ENCODE measurements at regions of chr5 and their contacts with region 1.

Region 1: DNA sequence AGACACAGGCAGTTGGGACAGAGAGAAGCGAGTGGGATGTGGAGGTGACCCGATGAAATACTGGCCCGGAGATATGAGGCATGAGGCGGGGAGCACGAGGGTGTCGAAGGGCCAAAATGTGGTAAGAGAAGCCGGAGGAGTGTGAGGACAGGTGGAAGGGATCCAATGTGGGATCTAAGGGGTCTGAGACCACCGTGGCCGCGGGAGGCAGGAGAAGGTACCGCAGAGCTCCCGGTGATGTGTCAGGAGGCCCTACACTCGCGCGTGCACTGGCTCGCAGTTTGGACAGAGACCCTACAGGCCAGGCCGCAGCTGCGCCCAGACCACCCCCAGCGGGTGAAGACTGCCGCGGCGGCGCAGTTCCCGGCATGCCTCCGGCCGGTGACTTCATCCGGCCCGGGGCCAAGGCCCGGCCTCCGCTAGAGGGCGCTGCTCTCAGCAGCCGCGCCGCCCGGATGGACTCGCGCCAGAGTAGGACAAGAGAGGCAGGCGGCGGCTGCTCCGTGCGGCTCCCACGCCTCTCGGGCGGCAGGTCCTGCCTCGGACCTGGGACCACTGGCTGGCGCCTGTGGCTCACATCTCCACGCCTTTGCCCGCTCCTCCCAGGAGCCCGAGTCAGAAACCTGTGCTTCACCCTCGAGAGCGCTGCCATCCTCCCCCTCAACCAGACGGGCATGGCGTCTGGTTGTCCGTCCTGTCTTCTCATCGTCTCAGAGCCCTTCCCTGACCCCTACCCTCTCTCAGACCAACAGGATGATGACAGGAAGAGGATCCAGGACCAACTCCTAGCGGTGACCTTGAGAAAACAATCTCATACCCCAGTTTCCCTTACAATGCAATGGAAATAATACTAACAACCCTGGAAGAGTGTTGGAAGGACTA is 35.4 kb upstream of the STING1 start:
- DNase-seq: peak; percentile 93
- H3K4me3 Mint-ChIP-seq: peak overlapping the region; percentile 82
- H3K27ac Mint-ChIP-seq: peak overlapping the region; percentile 81
- H3K4me1 Mint-ChIP-seq: peaks cover 32% of the 10 kb centered on the region
- H3K27me3 Mint-ChIP-seq: no peaks in the 10 kb centered on the region

Region 2: GRCh38 chr5:139410993-139411828 is 106.7 kb before region 1 on chr5:
- CTCF ChIA-PET with region 1: interaction called, 443 read pairs
- POLR2A ChIA-PET with region 1: interaction called, 5 read pairs
- intact Hi-C with region 1: no loop called
- DNase-seq: no peak
- H3K4me3 Mint-ChIP-seq: no peak overlapping the region
- H3K27ac Mint-ChIP-seq: no peak overlapping the region
- H3K4me1 Mint-ChIP-seq: peaks cover 43% of the 10 kb centered on the region
- H3K27me3 Mint-ChIP-seq: no peaks in the 10 kb centered on the region

Region 3: DNA sequence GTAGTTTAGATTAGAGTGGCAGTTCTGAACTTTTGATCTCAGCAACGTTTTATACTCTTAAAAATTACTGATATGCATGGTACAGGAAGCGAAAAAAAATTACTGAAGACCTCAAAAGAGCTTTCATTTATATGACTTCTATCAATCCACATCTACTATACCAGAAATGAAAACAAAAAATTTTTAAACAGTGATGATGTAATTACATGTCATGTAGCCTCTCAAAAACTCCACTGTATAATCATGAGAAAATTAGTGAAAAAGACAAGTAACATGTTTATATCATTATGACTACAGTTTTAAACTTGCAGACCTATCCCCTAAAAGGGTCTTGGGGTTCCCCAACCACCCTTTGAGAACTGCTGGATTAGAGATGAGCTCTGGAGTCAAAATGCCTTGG is 87.9 kb before region 1 on chr5:
- CTCF ChIA-PET with region 1: interaction called, 443 read pairs
- POLR2A ChIA-PET with region 1: no interaction called
- intact Hi-C with region 1: loop called (anchors 5 kb)
- DNase-seq: no peak
- H3K4me3 Mint-ChIP-seq: no peak overlapping the region
- H3K27ac Mint-ChIP-seq: peak overlapping the region; percentile 69
- H3K4me1 Mint-ChIP-seq: peaks cover 11% of the 10 kb centered on the region
- H3K27me3 Mint-ChIP-seq: no peaks in the 10 kb centered on the region

Region 4: GRCh38 chr5:139446956-139447779 is 70.8 kb before region 1 on chr5:
- CTCF ChIA-PET with region 1: interaction called, 14 read pairs
- POLR2A ChIA-PET with region 1: interaction called, 4 read pairs
- intact Hi-C with region 1: no loop called
- DNase-seq: peak; percentile 72
- H3K4me3 Mint-ChIP-seq: peak overlapping the region; percentile 7
- H3K27ac Mint-ChIP-seq: peak overlapping the region; percentile 93
- H3K4me1 Mint-ChIP-seq: peaks cover 67% of the 10 kb centered on the region
- H3K27me3 Mint-ChIP-seq: no peaks in the 10 kb centered on the region

Region 5: DNA sequence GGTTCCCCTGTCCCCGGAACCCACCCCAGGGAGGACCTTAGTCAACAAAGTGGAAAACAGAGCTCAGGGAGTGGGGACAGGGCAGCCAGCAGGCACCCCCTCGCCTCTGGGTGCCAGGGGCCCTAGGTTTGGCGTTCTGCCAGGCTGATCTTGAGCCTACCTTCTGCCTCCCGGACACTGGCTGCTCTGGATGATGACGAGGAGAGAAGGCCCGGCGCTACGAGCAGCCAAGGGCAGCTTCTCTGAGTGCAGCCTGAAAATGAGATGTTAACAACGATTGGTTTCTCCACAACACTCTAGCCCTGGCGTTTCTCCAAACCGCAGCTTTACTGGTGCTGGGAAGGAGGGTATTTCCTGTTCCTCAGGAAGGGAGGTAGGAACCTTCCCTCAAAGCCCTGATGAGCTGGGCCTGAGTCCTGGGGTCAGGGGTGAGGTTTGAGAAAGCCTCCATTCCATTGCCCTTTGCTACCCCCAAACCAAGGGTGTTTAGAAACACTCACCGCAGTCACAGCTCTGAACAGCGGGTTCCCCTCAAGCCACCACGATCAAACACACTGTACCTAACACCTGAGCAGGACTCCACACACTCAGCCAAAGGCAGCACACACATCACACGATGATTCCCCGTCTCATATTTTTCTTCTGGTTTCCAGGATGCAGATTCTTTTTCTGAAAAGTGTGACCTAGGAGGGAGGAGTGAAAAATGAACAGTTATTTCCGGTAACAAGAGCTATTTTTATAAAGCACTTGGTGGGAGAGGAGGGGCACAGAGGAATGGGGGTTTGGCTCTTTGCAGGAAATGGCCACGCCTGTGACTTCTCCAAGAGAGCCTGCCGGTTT is 35.7 kb before region 1 on chr5 and contains the start of gene STING1:
- CTCF ChIA-PET with region 1: interaction called, 55 read pairs
- POLR2A ChIA-PET with region 1: interaction called, 16 read pairs
- intact Hi-C with region 1: loop called (anchors 1 kb)
- DNase-seq: peak; percentile 83
- H3K4me3 Mint-ChIP-seq: peak within 1 kb of the TSS; percentile 94
- H3K27ac Mint-ChIP-seq: peak within 1 kb of the TSS; percentile 99
- H3K4me1 Mint-ChIP-seq: peaks cover 38% of the 10 kb centered on the region
- H3K27me3 Mint-ChIP-seq: no peaks in the 10 kb centered on the region
- total RNA-seq, gene STING1: 339 to 344 TPM

Region 6: DNA sequence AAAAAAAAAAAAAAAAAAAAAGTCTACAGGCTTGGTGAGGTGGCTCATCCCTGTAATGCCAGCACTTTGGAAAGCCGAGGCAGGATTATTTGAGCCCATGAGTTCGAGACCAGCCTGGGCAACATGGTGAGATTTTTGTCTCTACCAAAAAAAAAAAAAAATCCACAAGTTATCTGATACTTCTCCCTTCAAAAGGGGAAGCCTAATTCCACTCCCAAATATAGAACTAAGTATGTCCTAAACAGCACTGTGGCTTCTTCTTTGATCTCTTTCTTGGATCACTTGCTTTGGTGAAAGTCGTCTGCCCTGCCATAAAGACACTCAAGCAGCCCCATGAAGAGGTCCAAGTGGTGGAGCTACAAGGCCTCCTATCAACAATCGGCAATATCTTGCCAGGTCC is 16.5 kb before region 1 on chr5:
- CTCF ChIA-PET with region 1: interaction called, 22 read pairs
- POLR2A ChIA-PET with region 1: interaction called, 9 read pairs
- intact Hi-C with region 1: no loop called
- DNase-seq: no peak
- H3K4me3 Mint-ChIP-seq: no peak overlapping the region
- H3K27ac Mint-ChIP-seq: no peak overlapping the region
- H3K4me1 Mint-ChIP-seq: peaks cover 3% of the 10 kb centered on the region
- H3K27me3 Mint-ChIP-seq: no peaks in the 10 kb centered on the region

Region 7: DNA sequence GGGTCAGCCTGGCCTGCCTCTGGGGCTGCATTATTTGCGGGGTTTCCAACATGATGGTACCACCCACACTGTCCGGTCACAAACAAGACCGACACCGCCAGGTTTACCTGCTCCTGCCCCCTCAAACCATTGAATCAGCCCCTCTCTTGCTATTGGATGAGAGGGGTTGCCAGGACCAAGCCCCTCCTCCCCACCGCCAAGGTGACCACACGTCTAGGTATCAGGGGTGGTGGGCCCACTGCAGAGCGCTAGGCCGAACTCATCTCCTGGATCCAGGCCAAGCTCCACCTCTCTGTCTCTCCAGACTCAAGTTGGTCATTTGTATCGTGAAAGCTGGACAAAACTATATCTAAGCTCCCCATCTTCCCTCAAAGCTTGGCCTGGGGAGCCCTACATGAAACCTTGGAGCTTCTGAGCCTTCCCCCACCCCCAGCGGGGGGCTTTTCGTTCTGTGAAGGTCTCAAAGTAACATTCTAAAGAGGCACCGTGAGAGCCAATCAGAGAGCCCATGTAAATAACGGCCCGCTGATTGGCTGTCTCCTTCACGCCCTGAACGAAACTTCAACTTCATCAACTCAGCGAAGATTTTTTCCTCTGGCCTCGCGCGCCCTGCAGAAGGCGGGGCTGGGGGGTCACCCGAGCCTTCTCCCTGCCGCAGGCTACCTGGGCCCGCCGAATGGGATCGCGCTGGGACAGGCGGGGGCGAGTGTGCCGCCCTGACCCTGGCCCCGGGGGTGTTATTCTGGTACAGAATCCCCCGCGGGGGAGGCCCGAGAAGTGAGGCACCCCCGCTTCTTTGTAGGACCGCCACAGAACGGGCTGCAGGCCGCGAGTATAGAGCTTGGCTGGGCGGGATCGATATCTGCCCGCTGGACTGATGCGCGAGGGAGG is 228.1 kb after region 1 on chr5:
- CTCF ChIA-PET with region 1: no interaction called
- POLR2A ChIA-PET with region 1: no interaction called
- intact Hi-C with region 1: loop called (anchors 5 kb)
- DNase-seq: peak; percentile 64
- H3K4me3 Mint-ChIP-seq: peak overlapping the region; percentile 14
- H3K27ac Mint-ChIP-seq: no peak overlapping the region
- H3K4me1 Mint-ChIP-seq: peaks cover 21% of the 10 kb centered on the region
- H3K27me3 Mint-ChIP-seq: peaks cover 10% of the 10 kb centered on the region